ENCODE measurements at regions of chr15 and their contacts with region 1.

Region 1: DNA sequence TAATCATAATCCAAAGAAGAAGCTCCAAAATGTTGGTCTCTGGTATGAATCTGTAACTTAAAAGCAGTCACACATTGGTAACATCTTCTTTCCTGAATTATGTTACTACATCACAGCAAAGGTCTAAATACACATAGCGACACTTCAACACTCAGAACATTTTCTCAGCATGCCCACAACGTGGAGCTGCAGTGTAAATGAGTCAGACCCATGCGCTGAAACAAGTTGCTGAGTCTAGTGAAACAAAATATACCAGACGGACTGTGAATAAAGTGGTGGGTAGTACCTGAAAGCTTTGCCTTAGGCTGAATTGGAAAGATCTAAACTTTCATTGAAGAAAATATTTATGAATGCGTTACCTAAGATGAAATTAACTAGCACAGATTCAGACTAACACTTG is 33.2 kb upstream of the GOLGA8B start:
- DNase-seq: peak; percentile 53
- H3K4me3 ChIP-seq: no peak overlapping the region
- H3K27ac ChIP-seq: no peak overlapping the region
- H3K4me1 ChIP-seq: peaks cover 22% of the 10 kb centered on the region
- H3K27me3 ChIP-seq: no peaks in the 10 kb centered on the region
- CTCF ChIP-seq: no peak
- POLR2A ChIP-seq: no peak

Region 2: GRCh38 chr15:34855397-34855796 is 238.8 kb after region 1 on chr15:
- CTCF ChIA-PET with region 1: interaction called, 9 read pairs
- POLR2A ChIA-PET with region 1: no interaction called
- dilution Hi-C with region 1: no loop called
- intact Hi-C with region 1: loop called (anchors 10 kb)
- DNase-seq: peak; percentile 91
- H3K4me3 ChIP-seq: no peak overlapping the region
- H3K27ac ChIP-seq: peak overlapping the region; percentile 5
- H3K4me1 ChIP-seq: peaks cover 28% of the 10 kb centered on the region
- H3K27me3 ChIP-seq: no peaks in the 10 kb centered on the region
- CTCF ChIP-seq: no peak
- POLR2A ChIP-seq: no peak

Region 3: GRCh38 chr15:34927726-34928125 is 311.1 kb after region 1 on chr15:
- CTCF ChIA-PET with region 1: interaction called, 204 read pairs
- POLR2A ChIA-PET with region 1: no interaction called
- dilution Hi-C with region 1: no loop called
- intact Hi-C with region 1: no loop called
- DNase-seq: peak; percentile 52
- H3K4me3 ChIP-seq: no peak overlapping the region
- H3K27ac ChIP-seq: no peak overlapping the region
- H3K4me1 ChIP-seq: no peaks in the 10 kb centered on the region
- H3K27me3 ChIP-seq: no peaks in the 10 kb centered on the region
- CTCF ChIP-seq: no peak
- POLR2A ChIP-seq: no peak